Gastrocnemius medialis (tissue), 4 donors: ENCODE measurements at regions of chr20 and their contacts with region 1.

Region 1: GRCh38 chr20:49610701-49611538 is 43.0 kb upstream of the PTGIS start:
- DNase-seq: peak; percentile 58 to 82
- ATAC-seq: peak; percentile 31 to 51
- H3K4me3 ChIP-seq: peak overlapping the region in 3 of 4 donors; percentile 30 to 40 (median 37)
- H3K27ac ChIP-seq: peak overlapping the region; percentile 75 to 92 (median 86)
- H3K4me1 ChIP-seq: peaks cover 10 to 14% of the 10 kb centered on the region in 2 donors
- H3K27me3 ChIP-seq: no peaks in the 10 kb centered on the region
- CTCF ChIP-seq: peak; percentile 100
- POLR2A ChIP-seq: no peak

Region 2: DNA sequence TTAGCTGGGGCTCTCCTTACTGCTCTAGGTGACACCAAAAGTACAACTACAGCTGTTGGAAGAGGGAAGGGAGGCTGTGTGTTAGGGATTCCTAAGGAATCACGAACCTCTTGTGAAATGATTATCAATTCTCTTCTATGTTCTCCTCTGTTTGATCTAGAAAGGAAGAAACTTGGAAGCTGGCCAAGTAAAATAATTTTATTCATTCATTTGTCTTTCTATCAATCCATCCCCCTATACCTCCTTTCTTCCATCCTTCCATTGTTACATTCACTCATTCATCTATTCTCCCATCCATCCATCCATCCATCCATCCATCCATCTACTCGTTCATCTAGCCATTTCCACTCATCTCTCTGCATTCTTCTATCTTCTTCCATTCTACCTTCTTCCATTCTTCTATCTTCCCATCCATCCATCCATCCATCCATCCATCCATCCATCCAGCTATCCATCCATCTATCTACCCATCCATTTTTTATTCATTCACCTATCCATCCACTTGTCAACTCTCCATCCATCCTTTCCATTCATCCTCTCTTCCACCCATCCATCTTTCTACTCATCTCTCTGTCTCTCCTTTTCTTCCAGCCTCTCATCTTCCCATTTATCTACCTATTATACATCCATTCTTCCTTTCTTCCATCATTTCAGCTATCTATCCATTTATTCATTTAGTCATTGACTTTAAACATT is 280.2 kb before region 1 on chr20:
- in situ Hi-C with region 1: loop called in 3 of 4 experiments (anchors 5 to 10 kb)
- intact Hi-C with region 1: loop called (anchors 2 kb)
- DNase-seq: no peak
- ATAC-seq: no peak
- H3K4me3 ChIP-seq: no peak overlapping the region
- H3K27ac ChIP-seq: no peak overlapping the region
- H3K4me1 ChIP-seq: no peaks in the 10 kb centered on the region
- H3K27me3 ChIP-seq: peaks cover 0 to 13% (median 13%) of the 10 kb centered on the region in 3 donors
- CTCF ChIP-seq: no peak
- POLR2A ChIP-seq: no peak

Region 3: GRCh38 chr20:49541733-49542513 is 69.0 kb before region 1 on chr20:
- in situ Hi-C with region 1: loop called (anchors 5 kb)
- intact Hi-C with region 1: loop called (anchors 1 kb)
- DNase-seq: peak; percentile 29 to 50
- ATAC-seq: peak; percentile 66 to 81
- H3K4me3 ChIP-seq: no peak overlapping the region
- H3K27ac ChIP-seq: no peak overlapping the region
- H3K4me1 ChIP-seq: no peaks in the 10 kb centered on the region
- H3K27me3 ChIP-seq: no peaks in the 10 kb centered on the region
- CTCF ChIP-seq: peak; percentile 68 to 84 (median 72)
- POLR2A ChIP-seq: no peak

Region 4: GRCh38 chr20:49768204-49769047 is 157.5 kb after region 1 on chr20:
- in situ Hi-C with region 1: no loop called
- intact Hi-C with region 1: loop called (anchors 10 kb)
- DNase-seq: peak; percentile 70 to 87
- ATAC-seq: peak; percentile 70 to 77
- H3K4me3 ChIP-seq: no peak overlapping the region
- H3K27ac ChIP-seq: peak overlapping the region; percentile 82 to 90 (median 86)
- H3K4me1 ChIP-seq: peaks cover 34 to 61% of the 10 kb centered on the region in 2 donors
- H3K27me3 ChIP-seq: no peaks in the 10 kb centered on the region
- CTCF ChIP-seq: no peak
- POLR2A ChIP-seq: no peak

Region 5: GRCh38 chr20:49846206-49846807 is 235.4 kb after region 1 on chr20:
- in situ Hi-C with region 1: loop called (anchors 5 to 10 kb)
- intact Hi-C with region 1: loop called (anchors 1 kb)
- DNase-seq: no peak
- ATAC-seq: peak; percentile 55 to 80
- H3K4me3 ChIP-seq: no peak overlapping the region
- H3K27ac ChIP-seq: no peak overlapping the region
- H3K4me1 ChIP-seq: peaks cover 18 to 24% of the 10 kb centered on the region in 2 donors
- H3K27me3 ChIP-seq: no peaks in the 10 kb centered on the region
- CTCF ChIP-seq: peak; percentile 58 to 73 (median 68)
- POLR2A ChIP-seq: no peak

Region 6: GRCh38 chr20:49928401-49929141 is 317.7 kb after region 1 on chr20:
- in situ Hi-C with region 1: loop called in 1 of 4 experiments (anchors 10 kb)
- intact Hi-C with region 1: loop called (anchors 2 kb)
- DNase-seq: peak; percentile 62 to 72
- ATAC-seq: peak; percentile 80
- H3K4me3 ChIP-seq: no peak overlapping the region
- H3K27ac ChIP-seq: no peak overlapping the region
- H3K4me1 ChIP-seq: no peaks in the 10 kb centered on the region
- H3K27me3 ChIP-seq: no peaks in the 10 kb centered on the region
- CTCF ChIP-seq: peak; percentile 87 to 95 (median 88)
- POLR2A ChIP-seq: no peak